K562 (cell line): ENCODE measurements at regions of chr1 and their contacts with region 1.

Region 1: GRCh38 chr1:212915245-212916091 is 34.9 kb upstream of the VASH2 start:
- DNase-seq: peak; percentile 60 to 70 (median 65)
- ATAC-seq: peak; percentile 78
- H3K4me3 ChIP-seq: no peak overlapping the region
- H3K27ac ChIP-seq: no peak overlapping the region; the same call in 2 of the 3 replicates
- H3K4me1 ChIP-seq: peaks cover 11% of the 10 kb centered on the region in 2 experiments; a peak in 4 of 5 replicates
- H3K27me3 ChIP-seq: peaks cover 2 to 16% of the 10 kb centered on the region in 2 experiments; a peak in 3 of 5 replicates
- CTCF ChIP-seq: peak; percentile 75 to 83 (median 83)
- EP300 ChIP-seq: no peak
- POLR2A ChIP-seq: no peak
- RAD21 ChIP-seq: peak; percentile 55 to 89

Region 2: GRCh38 chr1:212477014-212477679 is 438.3 kb before region 1 on chr1:
- CTCF ChIA-PET with region 1: no interaction called
- POLR2A ChIA-PET with region 1: no interaction called
- in situ Hi-C with region 1: no loop called
- intact Hi-C with region 1: loop called (anchors 10 kb)
- DNase-seq: peak; percentile 88 to 93 (median 91)
- ATAC-seq: peak; percentile 97
- H3K4me3 ChIP-seq: no peak overlapping the region
- H3K27ac ChIP-seq: no peak overlapping the region
- H3K4me1 ChIP-seq: peaks cover 3 to 12% of the 10 kb centered on the region in 2 experiments; a peak in 4 of 5 replicates
- H3K27me3 ChIP-seq: peaks cover 11 to 42% of the 10 kb centered on the region in 2 experiments; a peak in 4 of 5 replicates
- CTCF ChIP-seq: peak; percentile 96 to 98 (median 97)
- EP300 ChIP-seq: no peak; the same call in 1 of the 2 replicates
- POLR2A ChIP-seq: no peak
- RAD21 ChIP-seq: peak; percentile 97 to 98

Region 3: DNA sequence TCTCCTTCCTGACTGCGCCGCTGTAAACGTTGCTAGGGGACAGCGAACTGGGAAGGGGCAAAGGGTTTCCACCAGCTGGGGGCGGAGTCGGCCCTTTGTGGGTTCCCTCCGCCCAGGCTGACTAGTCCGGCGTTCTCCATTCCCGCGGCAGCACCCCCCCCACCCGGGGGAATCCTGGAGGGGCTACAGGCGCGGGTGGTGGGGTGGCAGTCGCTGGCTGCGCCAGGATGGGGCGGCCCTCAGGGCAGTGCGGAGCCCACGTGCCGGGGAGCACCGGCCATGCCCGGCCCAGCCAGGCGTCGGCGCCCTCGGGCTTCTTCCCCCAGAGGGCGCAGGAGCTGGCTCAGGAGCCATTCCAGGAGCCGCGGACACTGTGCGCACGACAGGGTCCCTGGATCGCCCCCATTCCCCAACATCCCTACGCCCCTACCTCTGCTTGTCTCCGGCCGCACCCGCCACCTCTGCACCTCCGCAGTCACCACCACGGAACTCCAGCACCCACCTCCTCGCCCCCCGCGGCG is 216.3 kb before region 1 on chr1:
- CTCF ChIA-PET with region 1: no interaction called
- POLR2A ChIA-PET with region 1: no interaction called
- in situ Hi-C with region 1: no loop called
- intact Hi-C with region 1: loop called (anchors 10 kb)
- DNase-seq: peak; percentile 75 to 78 (median 76)
- ATAC-seq: peak; percentile 94
- H3K4me3 ChIP-seq: peak overlapping the region; percentile 46
- H3K27ac ChIP-seq: no peak overlapping the region
- H3K4me1 ChIP-seq: peaks cover 19 to 23% of the 10 kb centered on the region in 2 experiments
- H3K27me3 ChIP-seq: peaks cover 51 to 53% of the 10 kb centered on the region in 2 experiments
- CTCF ChIP-seq: peak; percentile 73 to 96 (median 82)
- EP300 ChIP-seq: no peak
- POLR2A ChIP-seq: no peak
- RAD21 ChIP-seq: peak; percentile 56 to 70

Region 4: DNA sequence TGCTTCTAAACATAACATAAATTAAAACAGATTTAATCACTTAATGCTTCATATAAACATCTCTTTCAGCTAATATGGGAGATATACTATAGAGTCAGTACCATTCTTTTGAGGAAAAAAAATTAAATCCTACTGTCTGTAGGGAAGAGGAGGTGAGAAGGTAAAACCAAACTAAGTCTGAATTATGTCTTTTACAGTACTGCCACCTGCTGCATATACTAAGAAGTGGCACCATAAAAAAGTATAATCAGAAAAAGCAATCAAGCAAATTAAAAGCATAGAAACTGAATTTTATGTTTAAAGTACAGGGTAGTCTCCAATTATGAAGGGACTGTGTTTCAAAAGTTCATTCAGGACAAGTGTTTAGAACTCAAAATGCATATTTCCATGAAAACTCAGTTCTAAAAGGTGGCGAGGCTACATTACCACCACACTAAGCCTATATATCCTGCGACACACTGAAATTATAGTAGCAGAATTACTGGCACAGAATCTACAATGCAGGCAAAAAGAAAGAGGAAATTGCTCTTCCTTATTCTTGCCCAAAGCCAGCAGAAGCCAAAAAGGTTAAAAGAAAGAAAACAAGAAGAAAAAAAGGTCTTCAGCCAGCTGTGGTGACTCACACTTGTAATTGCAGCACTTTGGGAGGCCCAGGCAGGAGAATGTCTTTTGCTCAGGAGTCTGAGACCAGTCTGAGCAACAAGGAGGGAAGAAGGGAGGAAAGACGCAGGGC is 132.9 kb before region 1 on chr1:
- CTCF ChIA-PET with region 1: no interaction called
- POLR2A ChIA-PET with region 1: no interaction called
- in situ Hi-C with region 1: no loop called
- intact Hi-C with region 1: loop called (anchors 2 kb)
- DNase-seq: peak in 1 of 4 experiments; percentile 23
- ATAC-seq: peak; percentile 84
- H3K4me3 ChIP-seq: no peak overlapping the region
- H3K27ac ChIP-seq: no peak overlapping the region
- H3K4me1 ChIP-seq: no peaks in the 10 kb centered on the region
- H3K27me3 ChIP-seq: no peaks in the 10 kb centered on the region
- CTCF ChIP-seq: peak in 2 of 3 experiments; percentile 50 to 81; a peak in 4 of 6 replicates
- EP300 ChIP-seq: no peak
- POLR2A ChIP-seq: no peak
- RAD21 ChIP-seq: peak; percentile 81 to 82

Region 5: GRCh38 chr1:212814537-212815334 is 100.7 kb before region 1 on chr1:
- CTCF ChIA-PET with region 1: interaction called, 9 read pairs
- POLR2A ChIA-PET with region 1: no interaction called
- in situ Hi-C with region 1: no loop called
- intact Hi-C with region 1: loop called (anchors 2 kb)
- DNase-seq: peak in 1 of 4 experiments; percentile 28
- ATAC-seq: no peak
- H3K4me3 ChIP-seq: no peak overlapping the region
- H3K27ac ChIP-seq: no peak overlapping the region
- H3K4me1 ChIP-seq: no peaks in the 10 kb centered on the region
- H3K27me3 ChIP-seq: no peaks in the 10 kb centered on the region
- CTCF ChIP-seq: peak in 2 of 3 experiments; percentile 39 to 49; a peak in 2 of 6 replicates
- EP300 ChIP-seq: no peak
- POLR2A ChIP-seq: no peak
- RAD21 ChIP-seq: peak; percentile 21 to 61; a peak in 3 of 4 replicates

Region 6: GRCh38 chr1:212827824-212828278 is 87.6 kb before region 1 on chr1:
- CTCF ChIA-PET with region 1: no interaction called
- POLR2A ChIA-PET with region 1: no interaction called
- in situ Hi-C with region 1: no loop called
- intact Hi-C with region 1: no loop called
- DNase-seq: no peak
- ATAC-seq: no peak
- H3K4me3 ChIP-seq: no peak overlapping the region
- H3K27ac ChIP-seq: no peak overlapping the region
- H3K4me1 ChIP-seq: no peaks in the 10 kb centered on the region; a peak in 1 of 5 replicates
- H3K27me3 ChIP-seq: 0 out of 5 replicates have a peak, but pooled peaks cover 0 to 4% of the 10 kb centered on the region in 2 experiments
- CTCF ChIP-seq: no peak
- EP300 ChIP-seq: no peak
- POLR2A ChIP-seq: no peak
- RAD21 ChIP-seq: no peak

Region 7: GRCh38 chr1:212899845-212900244 is 15.6 kb before region 1 on chr1:
- CTCF ChIA-PET with region 1: no interaction called
- POLR2A ChIA-PET with region 1: no interaction called
- in situ Hi-C with region 1: no loop called
- intact Hi-C with region 1: no loop called
- DNase-seq: no peak
- ATAC-seq: no peak
- H3K4me3 ChIP-seq: no peak overlapping the region
- H3K27ac ChIP-seq: no peak overlapping the region
- H3K4me1 ChIP-seq: no peaks in the 10 kb centered on the region
- H3K27me3 ChIP-seq: no peaks in the 10 kb centered on the region
- CTCF ChIP-seq: no peak
- EP300 ChIP-seq: no peak
- POLR2A ChIP-seq: no peak; the same call in 1 of the 2 replicates
- RAD21 ChIP-seq: no peak

Region 8: DNA sequence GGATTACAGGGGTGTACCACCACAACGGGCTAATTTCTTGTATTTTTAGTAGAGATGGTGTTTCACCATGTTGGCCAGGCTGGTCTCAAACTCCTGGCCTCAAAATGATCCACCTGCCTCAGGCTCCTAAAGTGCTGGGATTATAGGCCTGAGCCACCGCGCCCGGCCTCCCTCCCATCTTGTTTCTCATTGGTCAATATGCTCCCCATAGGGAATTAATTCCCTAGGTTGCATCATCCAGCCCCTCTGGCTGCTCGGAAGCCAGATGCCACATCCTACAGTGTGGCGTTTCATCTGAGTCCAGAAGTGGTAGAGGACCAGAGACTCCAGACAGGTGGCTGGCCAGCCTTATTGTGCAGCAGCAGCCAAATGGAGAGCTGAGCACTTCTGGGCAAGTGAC is 23.4 kb after region 1 on chr1:
- CTCF ChIA-PET with region 1: no interaction called
- POLR2A ChIA-PET with region 1: no interaction called
- in situ Hi-C with region 1: no loop called
- intact Hi-C with region 1: no loop called
- DNase-seq: no peak
- ATAC-seq: peak; percentile 82
- H3K4me3 ChIP-seq: no peak overlapping the region
- H3K27ac ChIP-seq: no peak overlapping the region
- H3K4me1 ChIP-seq: peaks cover 0 to 5% of the 10 kb centered on the region in 2 experiments; a peak in 1 of 5 replicates
- H3K27me3 ChIP-seq: peaks cover under 1 to 5% of the 10 kb centered on the region in 2 experiments; a peak in 3 of 5 replicates
- CTCF ChIP-seq: no peak
- EP300 ChIP-seq: no peak
- POLR2A ChIP-seq: no peak
- RAD21 ChIP-seq: no peak